Activated CD4-positive, alpha-beta T cell treated with anti-CD3 and anti-CD28 coated beads, Interleukin-2, amount 10 ng/mL, durations not matched to agents 24 days and 14 days (primary cell): ENCODE measurements at regions of chr17 and their contacts with region 1.

Region 1: GRCh38 chr17:70168977-70169708 is at the start of gene KCNJ2:
- DNase-seq: peak; percentile 91
- H3K4me3 Mint-ChIP-seq: peak within 1 kb of the TSS; percentile 71
- H3K27ac Mint-ChIP-seq: no peak within 1 kb of the TSS
- H3K4me1 Mint-ChIP-seq: peaks cover 13% of the 10 kb centered on the region
- H3K27me3 Mint-ChIP-seq: peaks cover 61% of the 10 kb centered on the region
- total RNA-seq, gene KCNJ2: not detected in 2 replicates

Region 2: GRCh38 chr17:69574257-69575197 is 594.6 kb before region 1 on chr17:
- intact Hi-C with region 1: loop called (anchors 2 kb)
- DNase-seq: no peak
- H3K4me3 Mint-ChIP-seq: no peak overlapping the region
- H3K27ac Mint-ChIP-seq: no peak overlapping the region
- H3K4me1 Mint-ChIP-seq: no peaks in the 10 kb centered on the region
- H3K27me3 Mint-ChIP-seq: peaks cover 13% of the 10 kb centered on the region

Region 3: GRCh38 chr17:69607162-69607834 is 561.8 kb before region 1 on chr17:
- intact Hi-C with region 1: loop called (anchors 2 kb)
- DNase-seq: peak; percentile 84
- H3K4me3 Mint-ChIP-seq: no peak overlapping the region
- H3K27ac Mint-ChIP-seq: peak overlapping the region; percentile 76
- H3K4me1 Mint-ChIP-seq: peaks cover 18% of the 10 kb centered on the region
- H3K27me3 Mint-ChIP-seq: no peaks in the 10 kb centered on the region

Region 4: DNA sequence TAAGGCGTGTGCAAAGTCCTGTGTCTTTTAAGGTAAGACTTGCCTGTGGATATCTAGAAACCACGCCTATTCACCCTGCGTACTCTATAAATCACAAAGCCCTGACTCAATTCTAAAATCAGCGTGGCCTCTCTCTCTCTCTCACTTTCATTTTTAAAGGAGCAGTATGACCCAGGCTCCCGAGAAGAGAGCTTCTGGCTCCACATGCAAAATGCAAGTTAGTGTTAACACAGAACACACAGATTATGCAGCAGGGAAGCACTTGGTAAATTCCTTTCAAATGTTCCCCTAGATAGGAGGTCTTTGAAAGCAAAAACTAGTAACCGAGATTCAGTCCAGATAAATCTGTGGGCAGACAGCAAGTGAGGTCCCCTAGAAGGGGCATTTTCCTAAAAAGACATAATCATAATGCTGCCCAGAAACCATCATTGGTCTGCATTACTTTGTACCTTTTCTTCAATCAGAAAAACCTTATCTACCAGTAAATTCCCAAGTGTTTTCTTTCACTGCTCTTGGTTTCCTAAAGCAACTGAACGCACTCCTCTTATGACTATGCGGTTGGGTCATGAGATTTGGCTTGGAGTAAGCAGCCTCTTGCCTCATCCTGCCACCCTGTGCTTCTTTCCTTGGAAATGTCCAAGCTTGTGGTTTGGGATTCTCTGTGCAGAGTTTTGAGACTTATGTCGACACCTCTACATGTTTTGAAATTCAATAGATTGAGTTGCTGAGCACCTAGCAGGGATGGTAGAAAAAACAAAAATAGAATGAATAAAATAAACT is 31.5 kb before region 1 on chr17:
- intact Hi-C with region 1: loop called (anchors 2 kb)
- DNase-seq: peak; percentile 76
- H3K4me3 Mint-ChIP-seq: no peak overlapping the region
- H3K27ac Mint-ChIP-seq: no peak overlapping the region
- H3K4me1 Mint-ChIP-seq: peaks cover 11% of the 10 kb centered on the region
- H3K27me3 Mint-ChIP-seq: peaks cover 6% of the 10 kb centered on the region